Psoas muscle (tissue), 8 donors: ENCODE measurements at regions of chr19 and their contacts with region 1.

Region 1: DNA sequence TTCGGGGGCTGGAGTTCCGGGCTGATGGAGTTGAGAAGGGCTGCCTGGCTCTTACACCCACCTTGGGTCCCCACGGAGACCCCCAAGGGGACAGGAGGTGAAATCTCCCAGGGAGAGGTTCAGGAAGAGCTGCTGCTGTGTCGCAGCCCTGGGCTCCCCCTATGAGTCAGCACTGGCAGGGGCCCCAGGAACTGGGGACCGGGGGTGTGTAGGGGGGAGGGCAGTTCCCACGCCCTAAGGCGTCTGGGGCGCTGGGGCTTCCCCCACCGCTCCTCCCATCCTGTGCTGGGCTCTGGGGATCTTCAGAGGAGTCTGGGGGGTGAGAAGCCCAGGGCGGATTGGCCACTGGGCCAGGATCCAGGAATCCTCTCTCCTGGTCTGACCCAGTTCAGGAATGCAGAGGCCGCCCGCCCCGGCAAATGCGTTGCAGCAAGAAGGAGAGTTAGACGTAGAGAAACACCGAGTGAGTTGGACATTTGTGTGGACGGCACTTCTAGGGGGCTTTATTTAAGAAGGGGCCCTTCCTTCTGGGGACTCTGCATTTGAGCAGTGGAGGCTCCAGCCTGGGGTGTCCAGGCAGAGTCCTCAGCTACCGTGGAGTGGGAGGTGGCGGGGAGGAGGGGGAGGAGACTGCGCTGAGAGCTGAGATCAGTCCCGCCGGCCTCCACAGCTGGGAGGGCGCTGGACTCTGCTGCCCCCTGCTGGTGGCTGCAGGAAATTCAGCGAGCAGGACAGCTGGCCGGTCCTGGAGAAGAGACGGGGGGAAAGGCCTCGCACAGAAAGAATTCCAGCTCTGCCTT is 15.0 kb upstream of the NANOS3 start:
- DNase-seq: peak; percentile 92 to 95
- ATAC-seq: peak; percentile 91 to 97 (median 94)
- H3K4me3 ChIP-seq: peak overlapping the region; percentile 63
- H3K27ac ChIP-seq: peak overlapping the region; percentile 78
- H3K4me1 ChIP-seq: peaks cover 11% of the 10 kb centered on the region
- H3K27me3 ChIP-seq: peaks cover 0 to 24% (median 0%) of the 10 kb centered on the region in 3 donors
- CTCF ChIP-seq: peak; percentile 99

Region 2: GRCh38 chr19:13277104-13277809 is 584.7 kb before region 1 on chr19:
- intact Hi-C with region 1: loop called (anchors 1 to 5 kb)
- DNase-seq: peak; percentile 28 to 59
- ATAC-seq: peak; percentile 86 to 97 (median 88)
- H3K4me3 ChIP-seq: no peak overlapping the region
- H3K27ac ChIP-seq: no peak overlapping the region
- H3K4me1 ChIP-seq: no peaks in the 10 kb centered on the region
- H3K27me3 ChIP-seq: peaks cover 0 to 11% (median 0%) of the 10 kb centered on the region in 3 donors
- CTCF ChIP-seq: peak; percentile 67

Region 3: DNA sequence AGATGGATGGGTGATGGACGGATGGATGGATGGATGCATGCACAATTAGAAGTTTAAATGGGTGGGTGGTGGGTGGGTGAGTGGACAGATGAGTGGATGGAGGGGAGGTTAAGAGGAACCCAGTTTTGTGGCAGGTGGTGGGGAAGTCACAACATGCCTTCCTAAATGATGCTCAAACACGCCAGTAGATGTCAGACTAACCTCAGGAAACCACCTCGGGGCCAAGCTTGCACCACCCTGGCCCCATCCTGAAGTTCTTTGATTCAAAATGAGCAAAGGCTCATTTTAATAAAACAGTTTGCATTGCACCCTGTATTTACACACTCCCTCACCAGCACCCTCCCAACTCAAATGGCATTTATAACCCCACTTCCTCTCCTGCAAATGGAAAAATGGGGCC is 264.3 kb before region 1 on chr19:
- intact Hi-C with region 1: loop called (anchors 2 to 5 kb)
- DNase-seq: peak in 1 of 2 donors; percentile 19
- ATAC-seq: peak; percentile 42 to 63 (median 58)
- H3K4me3 ChIP-seq: no peak overlapping the region
- H3K27ac ChIP-seq: no peak overlapping the region
- H3K4me1 ChIP-seq: no peaks in the 10 kb centered on the region
- H3K27me3 ChIP-seq: no peaks in the 10 kb centered on the region
- CTCF ChIP-seq: peak; percentile 54

Region 4: GRCh38 chr19:13784731-13785452 is 77.0 kb before region 1 on chr19:
- intact Hi-C with region 1: loop called (anchors 1 to 2 kb)
- DNase-seq: peak; percentile 72 to 87
- ATAC-seq: peak; percentile 80 to 90 (median 87)
- H3K4me3 ChIP-seq: peak overlapping the region; percentile 33
- H3K27ac ChIP-seq: no peak overlapping the region
- H3K4me1 ChIP-seq: peaks cover 17% of the 10 kb centered on the region
- H3K27me3 ChIP-seq: peaks cover 0 to 2% (median 0%) of the 10 kb centered on the region in 3 donors
- CTCF ChIP-seq: peak; percentile 65

Region 5: GRCh38 chr19:13880059-13881043 is 18.4 kb after region 1 on chr19:
- intact Hi-C with region 1: no loop called
- DNase-seq: peak; percentile 99
- ATAC-seq: peak; percentile 98 to 100 (median 98)
- H3K4me3 ChIP-seq: peak overlapping the region; percentile 53
- H3K27ac ChIP-seq: peak overlapping the region; percentile 83
- H3K4me1 ChIP-seq: peaks cover 15% of the 10 kb centered on the region
- H3K27me3 ChIP-seq: no peaks in the 10 kb centered on the region
- CTCF ChIP-seq: peak; percentile 98